ENCODE measurements at regions of chr2 and their contacts with region 1.

Region 1: GRCh38 chr2:164847981-164848741 is 6.5 kb upstream of the COBLL1 start:
- DNase-seq: no peak
- H3K4me3 ChIP-seq: no peak overlapping the region
- H3K27ac ChIP-seq: no peak overlapping the region
- H3K4me1 ChIP-seq: no peaks in the 10 kb centered on the region
- H3K27me3 ChIP-seq: no peaks in the 10 kb centered on the region
- CTCF ChIP-seq: no peak

Region 2: GRCh38 chr2:164920430-164920829 is 72.3 kb after region 1 on chr2:
- intact Hi-C with region 1: loop called (anchors 5 kb)
- DNase-seq: no peak
- H3K4me3 ChIP-seq: no peak overlapping the region
- H3K27ac ChIP-seq: no peak overlapping the region
- H3K4me1 ChIP-seq: no peaks in the 10 kb centered on the region
- H3K27me3 ChIP-seq: no peaks in the 10 kb centered on the region
- CTCF ChIP-seq: no peak

Measured in tibial artery (tissue), 4 donors.